Esophagus squamous epithelium (tissue), 5 donors: ENCODE measurements at regions of chr3 and their contacts with region 1.

Region 1: DNA sequence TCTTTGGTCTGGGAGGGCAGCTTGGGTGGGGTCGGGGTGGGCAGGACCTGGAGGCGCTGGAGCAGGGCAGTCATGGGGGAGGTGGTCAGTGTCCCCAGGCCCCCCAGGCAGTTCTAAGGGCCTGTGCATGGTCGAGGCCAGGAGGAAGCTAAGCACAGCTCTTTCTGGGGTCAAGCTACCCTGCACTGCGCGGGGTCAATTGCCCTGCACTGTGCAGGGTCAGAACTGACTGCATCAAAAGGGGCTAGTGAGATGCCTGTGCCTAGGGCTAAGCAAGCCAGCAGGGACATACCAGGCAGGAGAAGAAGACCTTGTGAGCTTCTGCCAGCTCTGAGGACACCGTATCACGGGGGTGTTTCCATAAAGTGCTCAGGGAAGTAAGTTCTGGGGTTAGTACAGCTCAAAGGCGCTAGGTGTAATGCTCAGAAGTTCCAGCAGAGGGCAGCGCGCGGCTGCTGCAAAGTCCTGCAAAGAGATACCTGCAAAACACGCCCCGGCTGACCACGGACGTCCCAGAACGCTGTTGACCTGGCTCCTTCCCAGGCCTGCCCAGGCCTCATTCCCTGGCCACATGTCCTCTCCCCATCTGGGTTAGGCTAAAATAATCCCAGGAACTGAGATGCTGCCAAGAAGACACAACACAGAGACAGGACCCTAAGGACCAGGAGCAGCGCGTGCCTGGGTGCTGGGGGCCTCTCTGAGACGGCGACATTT is 18.8 kb upstream of the IQSEC1 start:
- DNase-seq: no peak
- H3K4me3 ChIP-seq: peak overlapping the region in 1 of 4 donors; percentile 16
- H3K27ac ChIP-seq: no peak overlapping the region
- H3K4me1 ChIP-seq: peaks cover 0 to 11% (median 9%) of the 10 kb centered on the region in 3 donors
- H3K27me3 ChIP-seq: peaks cover 0 to 5% (median 0%) of the 10 kb centered on the region in 4 donors
- CTCF ChIP-seq: peak; percentile 87 to 98 (median 95)
- POLR2A ChIP-seq: no peak

Region 2: DNA sequence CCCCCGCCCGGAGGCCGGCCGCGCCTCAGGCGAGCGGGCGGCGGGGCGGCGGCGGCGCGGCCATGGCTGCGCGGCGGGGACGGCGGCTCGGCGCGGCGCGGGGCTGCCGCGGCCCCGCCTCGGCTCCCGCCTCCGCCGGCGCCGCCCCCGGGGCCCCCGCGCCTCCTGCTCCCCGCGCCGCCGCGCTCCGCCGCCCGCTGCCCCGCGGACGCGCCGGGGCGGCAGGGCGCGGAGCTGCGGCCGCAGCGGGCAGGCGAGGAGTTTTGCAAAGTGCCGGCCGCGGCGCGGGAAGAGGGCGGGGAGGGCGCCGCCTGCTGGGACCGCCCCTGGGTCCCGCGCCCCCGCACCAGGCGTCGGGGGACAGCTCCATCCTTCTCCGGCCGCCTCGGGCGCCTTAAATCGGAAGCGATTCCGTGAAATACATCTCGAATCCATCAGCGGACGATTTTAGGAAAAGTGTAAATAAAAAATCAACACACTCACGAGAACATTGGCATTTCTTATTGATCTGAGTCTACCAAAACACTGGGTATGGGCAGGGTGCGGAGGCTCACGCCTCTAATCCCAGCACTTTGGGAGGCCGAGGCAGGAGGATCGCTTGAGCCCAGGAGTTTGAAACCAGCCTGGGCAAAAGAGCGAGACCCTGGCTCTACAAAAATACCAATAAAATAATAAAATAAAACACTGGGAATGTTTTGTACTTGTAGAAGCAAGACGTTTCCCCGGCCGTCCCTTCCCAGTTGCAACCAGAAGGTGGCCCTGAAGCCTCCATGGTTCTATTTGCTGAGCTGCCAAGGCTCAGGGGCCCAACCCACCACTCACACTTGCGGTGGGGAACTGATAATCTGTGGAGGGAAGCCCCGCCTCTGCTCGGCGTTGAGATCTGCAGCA is 191.2 kb after region 1 on chr3:
- intact Hi-C with region 1: loop called (anchors 10 kb)
- DNase-seq: no peak
- H3K4me3 ChIP-seq: peak overlapping the region; percentile 30 to 67 (median 44)
- H3K27ac ChIP-seq: peak overlapping the region in 1 of 4 donors; percentile 80
- H3K4me1 ChIP-seq: peaks cover 8 to 24% (median 12%) of the 10 kb centered on the region in 3 donors
- H3K27me3 ChIP-seq: peaks cover 0 to 82% (median 14%) of the 10 kb centered on the region in 4 donors
- CTCF ChIP-seq: peak in 3 of 6 experiments; percentile 13 to 28 (median 18)
- POLR2A ChIP-seq: no peak

Region 3: DNA sequence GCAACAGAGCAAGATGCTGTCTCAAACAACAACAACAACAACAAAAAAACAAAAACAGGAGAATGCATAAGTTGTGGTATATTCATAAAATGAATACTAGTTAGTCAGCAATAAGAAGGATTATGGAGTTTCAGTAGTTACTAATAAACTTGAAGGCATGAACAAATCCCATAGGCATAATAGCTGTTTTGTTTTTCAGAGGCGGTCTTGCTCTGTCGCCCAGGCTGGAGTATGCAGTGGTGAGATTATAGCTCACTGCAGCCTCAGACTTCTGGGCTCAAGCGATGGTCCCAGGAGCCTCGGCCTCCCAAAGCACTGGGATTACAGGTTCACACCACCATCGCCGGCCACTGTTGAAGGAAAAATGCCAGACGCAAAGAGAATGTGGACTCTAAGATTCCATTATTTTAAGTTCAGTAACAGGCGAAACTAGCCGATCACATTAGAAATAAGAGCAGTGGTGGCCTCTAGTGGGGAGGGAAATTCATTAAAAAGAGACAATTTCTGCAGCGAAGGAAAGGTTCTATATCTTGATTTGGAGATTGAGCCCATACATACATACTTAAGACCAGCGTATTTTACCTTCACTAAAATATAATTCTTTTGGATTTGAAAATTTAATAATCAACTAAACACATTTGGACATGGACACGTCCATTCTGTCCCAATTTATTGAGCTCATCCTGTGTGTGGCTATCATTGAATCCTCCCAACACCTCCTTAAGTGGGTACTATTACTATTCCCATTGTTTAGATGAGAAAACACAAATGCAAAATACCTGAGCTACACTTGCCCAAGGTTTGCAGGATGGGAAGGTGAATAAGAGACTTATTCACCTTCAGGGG is 360.7 kb after region 1 on chr3:
- intact Hi-C with region 1: loop called (anchors 5 kb)
- DNase-seq: no peak
- H3K4me3 ChIP-seq: peak overlapping the region; percentile 34 to 74 (median 52)
- H3K27ac ChIP-seq: peak overlapping the region; percentile 80 to 95 (median 88)
- H3K4me1 ChIP-seq: peaks cover 7 to 40% (median 18%) of the 10 kb centered on the region in 3 donors
- H3K27me3 ChIP-seq: no peaks in the 10 kb centered on the region
- CTCF ChIP-seq: peak; percentile 24 to 69 (median 59)
- POLR2A ChIP-seq: no peak

Region 4: DNA sequence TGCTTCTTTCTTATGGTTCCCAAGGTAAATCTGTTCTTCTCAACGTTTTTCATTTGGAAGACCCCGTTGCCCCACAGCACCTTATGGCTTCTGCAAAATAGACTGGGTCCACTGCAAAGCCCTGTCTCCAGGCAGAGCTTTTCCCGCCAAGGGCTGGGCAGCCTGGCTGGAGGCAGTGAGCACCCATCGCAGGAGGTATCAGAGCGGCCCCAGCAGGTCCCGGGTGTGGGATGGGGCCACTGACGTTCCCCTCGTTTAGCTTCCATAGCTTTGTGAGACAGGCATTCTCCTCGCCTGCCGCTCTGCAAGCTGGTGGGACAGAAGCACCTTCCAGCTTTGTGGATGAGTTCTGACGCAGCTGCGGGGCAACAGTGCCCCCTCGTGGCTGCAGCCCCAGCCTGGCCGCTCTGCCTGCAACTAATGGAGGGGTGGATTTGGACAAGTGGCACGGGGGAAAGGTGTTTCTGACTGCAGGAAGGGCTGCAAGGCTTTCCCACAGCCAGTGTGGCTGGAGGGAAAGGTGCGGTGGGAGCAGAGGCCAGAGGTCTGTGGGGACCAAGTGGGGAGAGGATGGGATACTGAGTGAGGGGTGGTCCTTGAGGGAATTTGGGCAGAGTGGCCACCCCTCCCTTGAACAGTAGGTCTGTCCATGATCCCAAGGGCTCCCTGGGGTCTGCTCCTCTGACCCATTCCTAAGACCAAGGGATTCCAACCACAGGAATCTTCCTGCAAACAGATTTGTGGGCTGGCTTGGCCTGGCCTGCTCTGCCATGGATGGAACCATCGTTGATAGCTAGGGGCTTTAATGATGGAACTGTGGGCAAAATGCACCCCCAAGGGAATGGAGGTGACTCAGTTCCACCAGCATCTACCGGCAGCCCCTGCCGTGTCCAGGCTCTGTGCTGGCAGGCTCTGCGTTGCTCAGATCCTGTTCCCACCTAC is 556.3 kb after region 1 on chr3:
- intact Hi-C with region 1: loop called (anchors 5 kb)
- DNase-seq: no peak
- H3K4me3 ChIP-seq: no peak overlapping the region
- H3K27ac ChIP-seq: no peak overlapping the region
- H3K4me1 ChIP-seq: peaks cover 10 to 24% (median 12%) of the 10 kb centered on the region in 3 donors
- H3K27me3 ChIP-seq: peaks cover 0 to 55% (median 0%) of the 10 kb centered on the region in 4 donors
- CTCF ChIP-seq: peak; percentile 89 to 98 (median 96)
- POLR2A ChIP-seq: no peak